GM18951 (cell line): ENCODE measurements at regions of chr10 and their contacts with region 1.

Region 1: DNA sequence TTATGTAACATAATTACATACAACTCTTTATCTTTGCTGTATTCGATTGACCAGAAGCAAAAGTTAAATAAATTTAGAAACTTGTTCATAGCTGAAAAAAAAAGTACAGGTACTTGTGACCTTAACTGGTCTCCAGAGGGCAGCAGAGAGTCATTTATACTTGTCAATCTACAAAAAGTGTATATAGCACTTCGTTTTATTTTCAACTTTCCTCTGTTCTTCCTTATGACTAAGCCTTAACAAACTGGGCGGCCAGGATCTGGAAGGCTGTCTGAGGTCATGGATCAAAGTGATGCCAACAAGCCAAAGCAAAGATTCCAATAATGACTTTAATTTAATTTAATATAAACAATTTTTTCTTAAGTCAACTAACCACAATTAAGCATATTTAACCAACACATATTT is 29.8 kb downstream of the C10orf67 start:
- POLR2A ChIP-seq: no peak

Region 2: GRCh38 chr10:23525406-23525805 is 210.6 kb after region 1 on chr10:
- in situ Hi-C with region 1: loop called (anchors 5 kb)
- POLR2A ChIP-seq: no peak

Region 3: GRCh38 chr10:23694446-23694920 is 379.6 kb after region 1 on chr10:
- in situ Hi-C with region 1: loop called (anchors 25 kb)
- POLR2A ChIP-seq: no peak